GM12878 (cell line): ENCODE measurements at regions of chr13 and their contacts with region 1.

Region 1: GRCh38 chr13:28796938-28797257 is 23.2 kb upstream of the MTUS2 start:
- DNase-seq: no peak
- ATAC-seq: peak; percentile 34; the same call in 2 of the 3 replicates
- H3K4me3 ChIP-seq: no peak overlapping the region
- H3K27ac ChIP-seq: no peak overlapping the region
- H3K4me1 ChIP-seq: no peaks in the 10 kb centered on the region
- H3K27me3 ChIP-seq: no peaks in the 10 kb centered on the region; a peak in 1 of 4 replicates
- CTCF ChIP-seq: no peak
- EP300 ChIP-seq: no peak
- POLR2A ChIP-seq: no peak
- RAD21 ChIP-seq: no peak

Region 2: GRCh38 chr13:28679628-28680027 is 117.3 kb before region 1 on chr13:
- CTCF ChIA-PET with region 1: interaction called, 10 read pairs
- POLR2A ChIA-PET with region 1: no interaction called
- RAD21 ChIA-PET with region 1: interaction called, 12 read pairs
- SMC1A ChIA-PET with region 1: interaction called, 4 read pairs
- in situ Hi-C with region 1: loop called (anchors 5 kb)
- intact Hi-C with region 1: loop called (anchors 2 kb)
- DNase-seq: no peak
- ATAC-seq: peak; percentile 53
- H3K4me3 ChIP-seq: no peak overlapping the region
- H3K27ac ChIP-seq: no peak overlapping the region
- H3K4me1 ChIP-seq: no peaks in the 10 kb centered on the region
- H3K27me3 ChIP-seq: no peaks in the 10 kb centered on the region
- CTCF ChIP-seq: peak in 2 of 3 experiments; percentile 24 to 29; a peak in 2 of 6 replicates
- EP300 ChIP-seq: no peak
- POLR2A ChIP-seq: no peak
- RAD21 ChIP-seq: peak; percentile 32; the same call in 1 of the 2 replicates